Heart right ventricle (tissue), 16 donors: ENCODE measurements at regions of chr13 and their contacts with region 1.

Region 1: GRCh38 chr13:64688893-64689677 is 2541.1 kb downstream of the PCDH9 start:
- DNase-seq: no peak
- ATAC-seq: no peak
- H3K4me3 ChIP-seq: no peak overlapping the region
- H3K27ac ChIP-seq: no peak overlapping the region
- H3K4me1 ChIP-seq: no peaks in the 10 kb centered on the region
- H3K27me3 ChIP-seq: no peaks in the 10 kb centered on the region
- CTCF ChIP-seq: no peak

Region 2: GRCh38 chr13:63586467-63586866 is 1102.6 kb before region 1 on chr13:
- intact Hi-C with region 1: loop called in 1 of 10 experiments (anchors 5 kb)
- DNase-seq: no peak
- ATAC-seq: no peak
- H3K4me3 ChIP-seq: no peak overlapping the region
- H3K27ac ChIP-seq: no peak overlapping the region
- H3K4me1 ChIP-seq: no peaks in the 10 kb centered on the region
- H3K27me3 ChIP-seq: no peaks in the 10 kb centered on the region
- CTCF ChIP-seq: no peak

Region 3: GRCh38 chr13:64709079-64709478 is 20.0 kb after region 1 on chr13:
- intact Hi-C with region 1: loop called in 1 of 10 experiments (anchors 2 kb)
- DNase-seq: no peak
- ATAC-seq: no peak
- H3K4me3 ChIP-seq: no peak overlapping the region
- H3K27ac ChIP-seq: no peak overlapping the region
- H3K4me1 ChIP-seq: no peaks in the 10 kb centered on the region
- H3K27me3 ChIP-seq: no peaks in the 10 kb centered on the region
- CTCF ChIP-seq: no peak